CD4-positive, alpha-beta T cell (primary cell): ENCODE measurements at regions of chr4 and their contacts with region 1.

Region 1: GRCh38 chr4:16289897-16290554 is 63.8 kb upstream of the TAPT1 start:
- DNase-seq: peak in 3 of 14 experiments; percentile 7 to 40 (median 33)
- ATAC-seq: no peak
- H3K4me3 ChIP-seq: no peak overlapping the region
- H3K4me3 Mint-ChIP-seq: no peak overlapping the region
- H3K27ac ChIP-seq: no peak overlapping the region
- H3K27ac Mint-ChIP-seq: no peak overlapping the region
- H3K4me1 ChIP-seq: no peaks in the 10 kb centered on the region
- H3K4me1 Mint-ChIP-seq: peaks cover 4% of the 10 kb centered on the region
- H3K27me3 ChIP-seq: peaks cover 0 to 9% of the 10 kb centered on the region in 2 experiments
- H3K27me3 Mint-ChIP-seq: peaks cover 25% of the 10 kb centered on the region
- CTCF ChIP-seq: peak; percentile 69

Region 2: DNA sequence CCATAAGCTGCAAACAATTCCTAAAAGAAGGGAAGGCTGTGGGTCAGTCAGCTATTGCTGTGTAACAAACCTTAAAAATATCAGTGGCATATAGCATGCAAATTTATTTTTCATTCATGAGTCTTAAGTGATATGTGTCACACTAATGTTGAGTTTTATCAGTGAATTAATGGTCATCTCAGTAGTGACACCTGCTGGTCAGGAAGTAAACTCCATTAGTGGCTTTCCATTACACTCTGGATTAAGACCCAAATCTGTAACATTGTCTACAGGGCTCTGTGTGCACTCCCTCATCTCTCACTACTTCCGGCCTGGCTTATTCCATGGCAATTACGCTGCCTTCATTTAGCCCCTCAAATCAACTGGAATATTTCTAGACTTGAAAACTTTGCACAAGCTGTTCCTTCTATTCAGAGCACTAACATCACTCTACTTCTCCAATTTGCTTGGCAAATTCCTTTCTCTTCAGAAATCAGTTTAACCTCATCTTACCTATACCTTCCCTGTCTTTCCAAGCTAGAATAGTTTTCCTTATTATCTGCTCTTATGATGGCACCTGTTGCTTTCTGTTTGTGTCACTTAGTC is 153.6 kb after region 1 on chr4:
- CTCF ChIA-PET with region 1: no interaction called
- POLR2A ChIA-PET with region 1: no interaction called
- intact Hi-C with region 1: loop called (anchors 2 to 10 kb)
- DNase-seq: peak in 3 of 14 experiments; percentile 9 to 46 (median 34)
- ATAC-seq: no peak
- H3K4me3 ChIP-seq: no peak overlapping the region
- H3K4me3 Mint-ChIP-seq: no peak overlapping the region
- H3K27ac ChIP-seq: no peak overlapping the region
- H3K27ac Mint-ChIP-seq: no peak overlapping the region
- H3K4me1 ChIP-seq: no peaks in the 10 kb centered on the region
- H3K4me1 Mint-ChIP-seq: no peaks in the 10 kb centered on the region
- H3K27me3 ChIP-seq: no peaks in the 10 kb centered on the region
- H3K27me3 Mint-ChIP-seq: peaks cover 4% of the 10 kb centered on the region
- CTCF ChIP-seq: peak; percentile 57

Region 3: DNA sequence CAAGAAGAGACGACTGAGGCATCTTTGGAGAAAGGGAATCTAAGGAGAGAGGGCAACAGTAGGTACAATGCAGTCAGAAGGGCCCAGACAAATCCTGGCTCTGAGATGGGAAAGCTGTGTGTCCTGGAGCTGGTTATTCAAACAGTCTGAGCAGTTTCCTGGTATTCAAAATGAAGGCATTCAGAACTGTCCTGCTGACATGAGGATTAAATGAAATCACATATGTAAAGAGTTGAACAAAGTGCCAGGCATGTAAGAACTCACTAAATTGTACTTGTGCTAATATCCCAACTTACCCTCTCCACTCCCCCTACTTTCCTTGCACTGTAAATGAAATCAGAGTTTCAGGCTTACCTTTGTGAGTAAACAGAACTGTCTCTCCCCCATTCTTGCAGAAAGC is 669.3 kb after region 1 on chr4:
- CTCF ChIA-PET with region 1: no interaction called
- POLR2A ChIA-PET with region 1: no interaction called
- intact Hi-C with region 1: no loop called
- DNase-seq: no peak
- ATAC-seq: no peak
- H3K4me3 ChIP-seq: no peak overlapping the region
- H3K4me3 Mint-ChIP-seq: no peak overlapping the region
- H3K27ac ChIP-seq: no peak overlapping the region
- H3K27ac Mint-ChIP-seq: no peak overlapping the region
- H3K4me1 ChIP-seq: no peaks in the 10 kb centered on the region
- H3K4me1 Mint-ChIP-seq: no peaks in the 10 kb centered on the region
- H3K27me3 ChIP-seq: no peaks in the 10 kb centered on the region
- H3K27me3 Mint-ChIP-seq: peaks cover 4% of the 10 kb centered on the region
- CTCF ChIP-seq: no peak